ENCODE measurements at regions of chr19 and their contacts with region 1.

Region 1: DNA sequence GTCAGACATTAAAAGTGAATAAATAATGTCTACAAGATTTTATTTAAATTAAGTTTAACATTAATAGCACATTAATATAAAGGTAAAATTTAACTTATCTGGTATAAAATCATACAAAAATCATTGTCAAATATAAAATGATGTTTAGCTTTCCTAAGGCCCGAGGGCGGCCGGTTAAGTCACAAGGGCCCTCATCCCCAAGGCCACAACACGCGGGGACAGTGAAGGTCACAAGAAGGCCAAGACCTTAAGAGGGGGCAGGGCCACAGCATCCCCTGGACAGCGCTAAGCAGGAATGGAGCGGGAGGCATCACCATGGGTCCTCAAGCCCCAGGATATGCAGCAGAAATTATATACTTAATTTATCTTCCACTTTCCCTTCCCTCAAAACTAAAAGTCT is 62.7 kb upstream of the ZNF85 start:
- DNase-seq: no peak
- ATAC-seq: no peak
- H3K4me3 Mint-ChIP-seq: no peak overlapping the region
- H3K27ac Mint-ChIP-seq: no peak overlapping the region
- H3K4me1 Mint-ChIP-seq: no peaks in the 10 kb centered on the region
- H3K27me3 Mint-ChIP-seq: no peaks in the 10 kb centered on the region

Region 2: GRCh38 chr19:20791806-20792205 is 68.5 kb before region 1 on chr19:
- CTCF ChIA-PET with region 1: no interaction called
- POLR2A ChIA-PET with region 1: no interaction called
- intact Hi-C with region 1: no loop called
- DNase-seq: no peak
- ATAC-seq: no peak
- H3K4me3 Mint-ChIP-seq: no peak overlapping the region
- H3K27ac Mint-ChIP-seq: no peak overlapping the region
- H3K4me1 Mint-ChIP-seq: peaks cover 7% of the 10 kb centered on the region
- H3K27me3 Mint-ChIP-seq: no peaks in the 10 kb centered on the region

Region 3: GRCh38 chr19:20840371-20840770 is 20.0 kb before region 1 on chr19:
- CTCF ChIA-PET with region 1: no interaction called
- POLR2A ChIA-PET with region 1: no interaction called
- intact Hi-C with region 1: loop called in 1 of 2 experiments (anchors 2 kb)
- DNase-seq: no peak
- ATAC-seq: no peak
- H3K4me3 Mint-ChIP-seq: no peak overlapping the region
- H3K27ac Mint-ChIP-seq: no peak overlapping the region
- H3K4me1 Mint-ChIP-seq: no peaks in the 10 kb centered on the region
- H3K27me3 Mint-ChIP-seq: no peaks in the 10 kb centered on the region